ENCODE measurements at regions of chr2 and their contacts with region 1.

Region 1: GRCh38 chr2:140863713-140864112 is 1267.1 kb downstream of the LRP1B start:
- ATAC-seq: peak in 3 of 8 experiments; percentile 56 to 69 (median 59)
- H3K4me3 ChIP-seq: no peak overlapping the region
- H3K27ac ChIP-seq: no peak overlapping the region
- H3K4me1 ChIP-seq: no peaks in the 10 kb centered on the region

Region 2: GRCh38 chr2:139790807-139791752 is 1072.6 kb before region 1 on chr2:
- in situ Hi-C with region 1: loop called in 1 of 9 experiments (anchors 25 kb)
- ATAC-seq: peak; percentile 50 to 90 (median 57)
- H3K4me3 ChIP-seq: no peak overlapping the region
- H3K27ac ChIP-seq: no peak overlapping the region
- H3K4me1 ChIP-seq: peaks cover 4 to 28% of the 10 kb centered on the region in 2 donors

Measured in motor neuron (in vitro differentiated cells).